ENCODE measurements at regions of chr12 and their contacts with region 1.

Region 1: DNA sequence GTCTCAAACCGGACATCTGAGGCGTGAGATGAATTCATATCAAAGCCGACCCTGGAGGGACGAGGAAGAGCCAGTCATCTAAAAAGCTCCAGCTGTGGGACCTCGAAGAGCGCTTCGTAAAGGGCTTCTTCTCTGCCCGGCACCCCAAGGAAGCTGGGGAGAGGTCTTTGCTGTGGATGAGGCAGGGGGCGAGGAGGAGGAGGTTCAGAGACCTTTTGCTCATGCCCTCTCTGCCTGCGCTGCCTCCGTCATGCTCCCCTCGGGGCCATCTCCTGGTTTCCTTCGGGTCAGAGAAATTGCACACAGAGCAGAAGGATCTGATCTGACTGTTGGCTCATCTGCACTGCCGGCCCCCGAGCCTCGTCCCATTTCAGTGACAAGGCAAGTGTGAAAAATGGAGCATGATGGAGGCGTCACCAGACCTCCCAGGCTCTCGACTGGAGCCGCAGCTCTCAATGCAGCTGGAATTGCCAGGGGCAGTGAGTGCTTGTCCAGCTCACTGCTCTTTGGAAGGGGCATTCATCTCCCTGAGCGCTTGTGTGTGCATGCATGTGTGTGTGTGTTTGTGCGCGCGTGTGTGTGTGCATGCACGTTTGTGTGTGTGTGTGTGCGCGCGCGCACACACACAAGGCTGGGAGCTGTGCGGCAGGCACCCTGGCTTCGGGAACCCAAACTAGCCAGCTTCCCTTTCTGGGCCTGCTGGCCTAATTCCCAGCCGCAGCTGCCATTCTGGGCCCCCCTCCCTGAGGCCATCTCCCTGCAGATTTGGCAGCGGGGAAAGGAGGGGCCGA is 9.2 kb downstream of the CABP1 start:
- DNase-seq: no peak

Region 2: DNA sequence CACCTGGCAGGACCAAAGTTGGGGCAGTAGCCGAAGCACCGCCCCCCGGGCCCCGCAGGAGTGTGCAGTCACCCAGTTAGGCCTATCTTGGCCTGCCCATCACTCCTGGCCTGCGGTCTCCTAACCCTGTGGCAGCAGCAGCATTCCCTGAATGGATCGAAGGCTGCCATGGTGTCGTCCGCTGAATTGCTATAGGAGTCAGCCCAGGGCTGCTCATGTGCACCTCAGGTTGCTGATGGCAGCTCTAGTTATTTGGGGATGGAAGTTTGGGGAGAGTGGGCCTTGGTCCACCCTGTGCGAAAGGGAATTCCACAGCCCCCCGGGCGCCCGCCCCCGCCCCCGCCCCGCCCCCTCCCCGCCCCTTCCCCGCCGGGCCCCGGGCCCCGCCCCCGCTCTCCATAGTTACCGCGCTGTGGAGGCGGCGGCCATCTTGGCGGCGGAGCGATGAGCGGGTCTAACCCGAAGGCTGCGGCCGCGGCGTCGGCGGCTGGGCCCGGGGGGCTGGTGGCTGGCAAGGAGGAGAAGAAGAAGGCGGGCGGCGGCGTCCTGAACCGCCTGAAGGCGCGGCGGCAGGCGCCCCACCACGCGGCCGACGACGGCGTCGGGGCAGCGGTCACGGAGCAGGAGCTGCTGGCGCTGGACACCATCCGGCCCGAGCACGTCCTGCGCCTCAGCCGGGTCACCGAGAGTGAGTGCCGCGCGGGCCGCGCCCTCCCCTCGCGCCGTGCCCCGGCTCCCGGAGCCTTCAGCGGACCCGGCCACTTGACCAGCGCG is 60.6 kb after region 1 on chr12 and contains the start of gene UNC119B:
- intact Hi-C with region 1: loop called in 1 of 2 experiments (anchors 5 kb)
- DNase-seq: peak; percentile 93
- total RNA-seq, gene UNC119B: 20.6 to 21.3 TPM